Activated T-helper 2 cell treated with anti-CD3 and anti-CD28 coated beads, Interferon-gamma antibody, Interleukin-2, Interleukin-4, amounts not matched to agents 10 μg/mL and 5 μg/mL and 100 μg/mL, durations not matched to agents 14 hours and 24 hours and 36 hours (primary cell): ENCODE measurements at regions of chr20 and their contacts with region 1.

Region 1: GRCh38 chr20:44960103-44960852 is at the start of gene TOMM34:
- DNase-seq: peak; percentile 92
- H3K4me3 Mint-ChIP-seq: peak within 1 kb of the TSS; percentile 99
- H3K27ac Mint-ChIP-seq: peak within 1 kb of the TSS; percentile 100
- H3K4me1 Mint-ChIP-seq: peaks cover 61% of the 10 kb centered on the region
- H3K27me3 Mint-ChIP-seq: no peaks in the 10 kb centered on the region
- total RNA-seq, gene TOMM34: 59.5 and 62.1 TPM in 2 replicates

Region 2: GRCh38 chr20:44885392-44886265 is 74.6 kb before region 1 on chr20 and contains the start of gene YWHAB:
- intact Hi-C with region 1: loop called (anchors 1 kb)
- DNase-seq: peak; percentile 97
- H3K4me3 Mint-ChIP-seq: peak within 1 kb of the TSS; percentile 97
- H3K27ac Mint-ChIP-seq: peak within 1 kb of the TSS; percentile 91
- H3K4me1 Mint-ChIP-seq: peaks cover 48% of the 10 kb centered on the region
- H3K27me3 Mint-ChIP-seq: peaks cover 1% of the 10 kb centered on the region
- total RNA-seq, gene YWHAB: 221 and 225 TPM in 2 replicates

Region 3: GRCh38 chr20:44909872-44910689 is 50.2 kb before region 1 on chr20 and contains the start of gene PABPC1L:
- intact Hi-C with region 1: loop called (anchors 2 kb)
- DNase-seq: peak; percentile 68
- H3K4me3 Mint-ChIP-seq: peak within 1 kb of the TSS; percentile 86
- H3K27ac Mint-ChIP-seq: peak within 1 kb of the TSS; percentile 58
- H3K4me1 Mint-ChIP-seq: peaks cover 27% of the 10 kb centered on the region
- H3K27me3 Mint-ChIP-seq: no peaks in the 10 kb centered on the region
- total RNA-seq, gene PABPC1L: 83.6 and 94.1 TPM in 2 replicates

Region 4: GRCh38 chr20:44990425-44990824 is 30.1 kb after region 1 on chr20:
- intact Hi-C with region 1: loop called (anchors 5 kb)
- DNase-seq: no peak
- H3K4me3 Mint-ChIP-seq: peak overlapping the region; percentile 74
- H3K27ac Mint-ChIP-seq: peak overlapping the region; percentile 90
- H3K4me1 Mint-ChIP-seq: peaks cover 66% of the 10 kb centered on the region
- H3K27me3 Mint-ChIP-seq: no peaks in the 10 kb centered on the region

Region 5: GRCh38 chr20:45149062-45149461 is 188.8 kb after region 1 on chr20:
- intact Hi-C with region 1: no loop called
- DNase-seq: no peak
- H3K4me3 Mint-ChIP-seq: no peak overlapping the region
- H3K27ac Mint-ChIP-seq: no peak overlapping the region
- H3K4me1 Mint-ChIP-seq: no peaks in the 10 kb centered on the region
- H3K27me3 Mint-ChIP-seq: peaks cover 15% of the 10 kb centered on the region